Activated B cell treated with CpG ODN at 0.5 μM for 24 hours (primary cell): ENCODE measurements at regions of chr6 and their contacts with region 1.

Region 1: DNA sequence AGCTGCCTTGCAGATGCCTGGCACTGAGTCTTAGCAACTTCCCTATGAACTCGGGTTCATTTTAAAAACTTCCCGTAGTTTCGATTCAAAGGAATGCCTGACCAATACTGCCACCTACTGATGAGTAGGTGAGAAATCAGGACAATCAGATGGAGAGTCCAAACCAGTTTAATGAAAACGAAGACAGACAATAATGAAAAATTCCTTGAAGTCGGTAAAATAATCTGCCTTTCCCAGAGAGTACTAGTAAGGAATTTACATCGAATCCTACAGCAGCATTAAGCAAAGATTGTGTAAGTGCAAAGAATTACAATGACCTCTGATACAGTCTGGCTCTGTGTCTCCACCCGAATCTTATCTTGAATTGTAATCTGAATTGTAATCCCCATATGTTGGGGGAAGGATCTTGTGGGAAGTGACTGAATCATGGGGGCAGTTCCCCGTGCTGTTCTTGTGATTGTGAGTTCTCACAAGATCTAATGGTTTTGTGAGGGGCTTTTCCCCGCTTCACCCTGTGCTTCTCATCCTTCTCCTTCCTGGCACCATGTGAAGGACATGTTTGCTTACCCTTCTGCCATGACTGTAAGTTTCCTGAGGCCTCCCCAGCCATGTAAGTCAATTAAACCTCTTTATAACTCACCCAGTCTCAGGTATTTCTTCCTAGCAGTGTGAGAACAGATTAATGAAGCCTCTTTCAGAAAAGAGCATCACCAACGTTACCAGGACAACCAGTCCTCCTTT is 134.4 kb downstream of the ARHGAP18 start:
- DNase-seq: no peak
- ATAC-seq: no peak
- H3K4me3 Mint-ChIP-seq: peak overlapping the region; percentile 32
- H3K27ac Mint-ChIP-seq: no peak overlapping the region
- H3K4me1 Mint-ChIP-seq: peaks cover 4% of the 10 kb centered on the region
- H3K27me3 Mint-ChIP-seq: no peaks in the 10 kb centered on the region
- CTCF ChIP-seq: no peak

Region 2: DNA sequence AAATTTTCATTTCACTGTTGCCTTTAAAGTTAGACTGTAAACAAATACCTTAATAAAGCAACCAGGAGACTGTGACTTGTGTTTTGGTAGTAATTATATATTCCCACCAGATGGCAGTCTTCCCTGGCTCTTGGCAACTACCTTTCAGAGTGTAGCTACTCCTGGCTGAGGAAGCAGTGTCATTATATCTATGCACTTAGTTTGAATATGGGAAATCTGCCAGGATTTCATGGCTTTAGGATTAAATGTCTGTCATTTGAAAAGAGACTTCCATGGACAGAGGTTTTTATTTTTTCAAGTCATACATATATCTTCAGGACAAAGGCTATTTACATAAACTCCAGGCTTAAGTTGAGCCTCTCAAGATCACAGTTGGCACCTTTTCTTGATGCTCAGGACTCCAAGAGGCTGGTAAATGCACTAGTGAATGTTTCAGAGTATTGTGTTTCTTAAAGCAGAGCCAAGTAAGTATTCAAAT is 1838.5 kb before region 1 on chr6:
- CTCF ChIA-PET with region 1: no interaction called
- POLR2A ChIA-PET with region 1: no interaction called
- intact Hi-C with region 1: loop called (anchors 2 kb)
- DNase-seq: no peak
- ATAC-seq: no peak
- H3K4me3 Mint-ChIP-seq: no peak overlapping the region
- H3K27ac Mint-ChIP-seq: no peak overlapping the region
- H3K4me1 Mint-ChIP-seq: peaks cover 1% of the 10 kb centered on the region
- H3K27me3 Mint-ChIP-seq: no peaks in the 10 kb centered on the region
- CTCF ChIP-seq: no peak

Region 3: GRCh38 chr6:128725271-128726233 is 850.0 kb before region 1 on chr6:
- CTCF ChIA-PET with region 1: no interaction called
- POLR2A ChIA-PET with region 1: no interaction called
- intact Hi-C with region 1: loop called (anchors 2 kb)
- DNase-seq: no peak
- ATAC-seq: no peak
- H3K4me3 Mint-ChIP-seq: no peak overlapping the region
- H3K27ac Mint-ChIP-seq: no peak overlapping the region
- H3K4me1 Mint-ChIP-seq: no peaks in the 10 kb centered on the region
- H3K27me3 Mint-ChIP-seq: no peaks in the 10 kb centered on the region
- CTCF ChIP-seq: peak; percentile 52

Region 4: DNA sequence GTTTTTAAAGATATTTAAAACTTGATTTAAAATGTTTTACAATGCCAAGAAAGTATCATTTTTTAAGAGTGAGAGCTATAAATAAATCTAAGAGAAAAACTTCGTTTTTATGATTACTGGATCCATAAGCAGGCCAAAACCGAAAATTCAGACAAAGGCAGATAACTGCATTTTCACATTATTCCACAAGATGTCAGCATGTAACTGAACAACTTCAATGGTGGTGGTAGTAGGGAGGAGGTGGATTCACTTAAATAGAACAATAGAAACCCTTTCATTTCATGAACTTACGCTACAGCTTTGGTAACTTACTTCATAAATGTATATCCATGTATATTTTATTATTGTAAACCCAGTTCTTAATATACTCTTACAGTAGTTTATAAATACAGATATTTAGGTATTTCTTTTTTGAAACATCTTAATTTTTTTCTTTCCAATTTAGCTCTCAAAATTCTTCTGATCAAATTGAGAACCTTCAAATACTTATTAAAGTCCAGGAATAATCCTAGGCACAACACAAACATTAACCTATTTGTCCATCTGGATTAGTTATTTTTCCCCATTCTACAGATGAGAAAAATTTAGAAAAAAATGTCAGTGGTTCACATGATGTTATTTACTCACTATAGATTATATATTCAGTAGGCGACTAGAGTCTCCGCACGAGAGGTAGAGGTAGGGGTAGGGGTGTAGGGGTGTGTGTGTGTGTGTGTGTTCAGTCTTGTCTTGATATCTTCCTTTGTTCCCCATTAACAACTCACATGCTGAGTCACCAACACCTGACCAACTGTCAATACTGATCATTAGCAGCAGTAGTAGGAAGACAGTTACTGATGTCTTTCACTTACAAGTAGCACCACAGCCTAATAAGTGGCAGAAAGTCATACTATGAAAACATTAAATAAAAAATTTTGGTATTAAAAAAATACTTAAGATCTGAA is 23.0 kb after region 1 on chr6:
- CTCF ChIA-PET with region 1: no interaction called
- POLR2A ChIA-PET with region 1: no interaction called
- intact Hi-C with region 1: no loop called
- DNase-seq: no peak
- ATAC-seq: peak; percentile 93
- H3K4me3 Mint-ChIP-seq: no peak overlapping the region
- H3K27ac Mint-ChIP-seq: no peak overlapping the region
- H3K4me1 Mint-ChIP-seq: peaks cover 5% of the 10 kb centered on the region
- H3K27me3 Mint-ChIP-seq: no peaks in the 10 kb centered on the region
- CTCF ChIP-seq: peak; percentile 53